Right ventricle myocardium inferior (tissue), 1 donor: ENCODE measurements at regions of chr1 and their contacts with region 1.

Region 1: DNA sequence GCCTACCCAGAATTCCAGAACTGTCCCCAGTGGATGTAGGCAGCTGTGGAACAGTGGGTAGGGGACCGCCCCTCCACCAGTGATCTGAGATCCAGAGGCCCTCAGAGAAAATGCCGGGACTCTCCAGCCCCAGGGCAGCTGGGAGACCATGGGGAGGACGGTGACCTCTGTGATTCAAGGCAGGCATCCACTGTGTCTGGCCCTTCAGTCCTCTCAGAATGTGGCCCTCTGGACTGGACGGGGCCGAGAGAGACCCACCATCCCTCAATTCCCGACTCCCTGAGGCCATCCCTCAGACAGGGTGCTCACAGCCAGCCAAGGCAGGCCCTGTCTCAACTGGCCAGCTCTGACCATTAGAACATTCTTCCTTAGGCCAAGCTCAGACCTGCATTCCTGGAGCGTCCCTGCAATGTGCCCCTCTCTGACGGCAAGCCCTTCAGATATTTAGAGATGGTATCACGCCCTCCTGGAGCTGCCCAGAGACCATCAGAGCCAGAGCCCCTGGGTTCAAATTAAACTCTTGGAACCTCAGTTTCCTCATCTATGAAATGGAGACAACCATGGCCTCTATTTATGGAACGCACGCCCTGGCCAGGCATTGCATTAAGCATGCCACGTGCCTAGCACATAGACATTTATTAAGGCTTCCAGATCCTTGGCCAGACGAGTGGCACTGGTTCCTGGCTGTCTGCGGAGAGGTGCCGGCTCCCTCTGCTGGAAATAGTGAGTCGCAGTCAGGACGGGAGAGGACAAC is 9.6 kb upstream of the EPS8L3 start:
- DNase-seq: peak; percentile 88
- ATAC-seq: peak; percentile 89

Region 2: GRCh38 chr1:109548321-109549267 is 224.7 kb before region 1 on chr1 and contains the start of gene GNAI3:
- intact Hi-C with region 1: loop called (anchors 1 kb)
- DNase-seq: peak; percentile 97
- ATAC-seq: peak; percentile 97
- total RNA-seq, gene GNAI3: 2.3 TPM

Region 3: GRCh38 chr1:109643385-109644230 is 129.7 kb before region 1 on chr1:
- intact Hi-C with region 1: loop called (anchors 1 kb)
- DNase-seq: peak; percentile 89
- ATAC-seq: peak; percentile 73

Region 4: DNA sequence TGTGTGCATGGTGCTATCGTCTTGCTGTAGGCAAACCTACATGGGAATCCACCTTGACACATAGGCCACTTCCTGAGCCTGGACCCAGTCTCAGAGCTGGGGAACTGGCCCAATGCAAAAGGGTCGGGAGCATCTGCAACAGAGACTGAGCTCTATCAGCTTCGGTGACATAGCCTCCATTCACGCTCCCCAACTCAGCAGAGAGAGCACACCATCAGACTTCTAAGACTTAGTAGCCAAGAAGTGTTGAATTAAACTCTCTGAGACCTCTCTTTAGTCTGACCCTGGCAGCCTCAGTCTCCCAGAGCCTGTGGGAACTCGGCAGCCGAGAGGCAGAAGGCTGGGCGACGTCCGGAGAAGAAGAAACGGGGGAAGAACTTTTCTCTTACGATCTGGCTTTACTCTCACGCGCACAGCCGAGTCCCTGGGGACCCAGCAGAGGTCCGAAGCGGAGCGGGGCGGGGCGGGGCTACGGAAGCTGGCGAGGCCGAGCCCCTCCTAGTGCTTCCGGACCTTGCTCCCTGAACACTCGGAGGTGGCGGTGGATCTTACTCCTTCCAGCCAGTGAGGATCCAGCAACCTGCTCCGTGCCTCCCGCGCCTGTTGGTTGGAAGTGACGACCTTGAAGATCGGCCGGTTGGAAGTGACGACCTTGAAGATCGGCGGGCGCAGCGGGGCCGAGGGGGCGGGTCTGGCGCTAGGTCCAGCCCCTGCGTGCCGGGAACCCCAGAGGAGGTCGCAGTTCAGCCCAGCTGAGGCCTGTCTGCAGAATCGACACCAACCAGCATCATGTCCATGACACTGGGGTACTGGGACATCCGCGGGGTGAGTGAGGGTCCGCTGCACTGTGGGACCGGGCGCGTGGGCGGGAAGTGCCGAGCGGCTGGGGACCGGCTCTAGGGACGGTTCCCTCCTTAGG is 117.5 kb before region 1 on chr1 and contains the start of gene GSTM4:
- intact Hi-C with region 1: loop called (anchors 5 kb)
- DNase-seq: peak; percentile 93
- ATAC-seq: peak; percentile 93
- total RNA-seq, gene GSTM4: 35.1 TPM

Region 5: DNA sequence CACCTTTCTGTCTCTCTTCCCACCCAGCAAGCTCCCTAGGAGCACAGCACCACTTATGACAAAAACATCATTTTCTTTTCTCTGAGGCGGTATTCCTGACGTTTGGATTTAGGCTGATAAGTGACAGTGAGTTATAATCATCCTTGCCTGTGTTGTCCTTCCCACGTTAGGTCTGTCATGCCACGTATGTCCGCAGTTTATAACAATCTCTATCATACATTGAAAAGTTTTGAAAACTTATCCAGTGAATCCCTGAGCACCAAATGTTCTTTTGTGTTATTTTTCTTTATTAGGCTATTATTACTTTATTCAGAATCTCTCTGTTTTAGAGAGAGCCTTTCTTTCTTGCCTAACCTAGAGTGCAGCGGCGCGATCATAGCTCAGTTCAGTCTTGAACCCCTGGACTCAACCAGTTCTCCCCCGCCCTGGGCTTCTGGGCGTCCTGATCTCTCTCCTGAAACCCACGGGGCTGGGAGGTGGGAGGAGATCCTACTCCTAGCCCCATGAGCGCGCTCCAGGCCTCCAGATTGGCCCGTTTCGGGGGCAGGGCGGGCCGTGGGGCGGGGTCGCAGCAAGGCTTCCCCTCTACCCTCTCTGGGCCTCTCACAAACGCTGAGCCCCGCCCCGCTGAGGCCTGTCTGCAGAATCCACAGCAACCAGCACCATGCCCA is 105.7 kb before region 1 on chr1 and contains the start of gene GSTM2:
- intact Hi-C with region 1: loop called (anchors 5 kb)
- DNase-seq: peak; percentile 97
- ATAC-seq: peak; percentile 100
- total RNA-seq, gene GSTM2: 77.4 TPM

Region 6: GRCh38 chr1:109718491-109718890 is 54.8 kb before region 1 on chr1:
- intact Hi-C with region 1: loop called (anchors 5 kb)
- DNase-seq: no peak
- ATAC-seq: peak; percentile 47

Region 7: DNA sequence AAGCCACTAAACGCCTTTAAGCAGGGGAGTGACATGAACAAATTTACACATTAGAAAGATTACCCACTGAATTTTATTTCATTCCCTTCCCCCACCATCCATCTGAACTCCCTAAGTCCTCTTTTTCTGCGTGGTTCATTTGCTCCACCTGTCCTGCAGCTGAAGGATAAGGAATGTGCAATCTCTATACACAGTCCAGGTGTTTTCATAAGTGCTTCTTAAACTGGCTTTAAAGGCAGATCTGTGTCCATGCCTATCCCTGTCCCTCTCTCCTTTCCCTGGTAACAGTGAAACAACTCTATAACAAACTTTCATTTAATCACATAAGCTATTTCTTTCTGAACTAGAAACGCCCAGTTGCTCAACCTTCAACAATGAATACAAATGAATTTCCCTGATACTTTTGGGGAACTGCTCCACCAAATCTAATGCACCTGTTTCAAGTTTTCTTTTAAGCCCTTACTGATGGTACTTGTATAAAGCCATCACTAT is 40.9 kb before region 1 on chr1:
- intact Hi-C with region 1: no loop called
- DNase-seq: no peak
- ATAC-seq: no peak